Stomach (tissue), 19 donors: ENCODE measurements at regions of chr1 and their contacts with region 1.

Region 1: DNA sequence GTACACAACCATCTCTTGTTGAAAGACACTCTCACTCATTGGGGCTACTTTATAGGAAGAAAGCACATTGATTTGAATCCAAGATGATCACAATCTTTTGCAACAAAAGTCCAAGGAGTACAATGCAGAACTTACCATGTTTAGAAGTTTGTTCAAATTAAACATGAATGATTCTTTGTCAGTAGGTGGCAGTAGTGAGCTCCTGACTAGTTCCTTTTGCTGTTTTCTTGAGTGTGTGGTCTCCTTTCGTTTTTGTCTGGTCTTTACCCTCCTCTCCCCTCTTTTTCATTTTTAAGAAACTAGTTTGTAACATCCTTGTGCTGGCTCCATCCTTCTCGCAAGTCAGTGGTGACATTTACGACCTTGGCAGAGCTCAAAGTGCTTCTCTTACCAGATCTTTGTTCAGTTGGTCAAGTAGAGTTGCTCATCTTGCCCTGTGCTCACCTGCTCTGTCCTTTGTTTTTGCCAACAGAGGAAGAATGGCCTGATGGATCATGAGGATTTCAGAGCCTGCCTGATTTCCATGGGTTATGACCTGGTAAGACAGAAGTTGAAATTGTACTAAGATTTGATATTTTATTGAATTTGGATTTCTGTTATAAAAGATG is 35.7 kb upstream of the MTR start:
- DNase-seq: peak in 1 of 2 donors; percentile 65
- H3K4me3 ChIP-seq: no peak overlapping the region
- H3K27ac ChIP-seq: no peak overlapping the region
- H3K4me1 ChIP-seq: peaks cover 0 to under 1% (median 0%) of the 10 kb centered on the region in 4 donors
- H3K27me3 ChIP-seq: no peaks in the 10 kb centered on the region
- CTCF ChIP-seq: peak in 4 of 7 experiments; percentile 39 to 62 (median 49)
- EP300 ChIP-seq: no peak
- POLR2A ChIP-seq: no peak

Region 2: DNA sequence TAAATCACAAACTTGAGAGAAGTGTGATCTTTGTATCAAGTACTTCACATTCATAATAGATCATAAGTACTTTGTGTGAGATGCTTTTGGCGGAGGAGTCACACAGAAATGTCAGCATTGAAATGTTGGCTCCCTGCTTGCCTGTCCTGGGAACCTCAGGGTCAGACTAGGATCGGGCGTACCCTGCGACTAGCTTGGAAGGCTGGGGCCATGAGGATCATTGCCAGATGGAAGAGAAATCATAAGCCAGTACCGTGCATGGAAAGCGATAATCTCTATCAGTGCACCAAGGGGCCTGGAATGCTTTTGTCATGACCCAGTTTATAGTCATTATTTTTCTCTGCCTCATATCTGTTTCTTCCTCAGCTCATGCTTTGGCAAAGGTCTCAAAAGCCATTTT is 71.2 kb after region 1 on chr1:
- intact Hi-C with region 1: no loop called
- DNase-seq: peak in 1 of 2 donors; percentile 16
- H3K4me3 ChIP-seq: no peak overlapping the region
- H3K27ac ChIP-seq: no peak overlapping the region
- H3K4me1 ChIP-seq: peaks cover 0 to 3% (median 0%) of the 10 kb centered on the region in 4 donors
- H3K27me3 ChIP-seq: no peaks in the 10 kb centered on the region
- CTCF ChIP-seq: no peak
- EP300 ChIP-seq: no peak
- POLR2A ChIP-seq: no peak

Region 3: GRCh38 chr1:237562242-237562823 is 803.0 kb after region 1 on chr1:
- intact Hi-C with region 1: loop called (anchors 10 kb)
- DNase-seq: peak in 1 of 2 donors; percentile 82
- H3K4me3 ChIP-seq: no peak overlapping the region
- H3K27ac ChIP-seq: no peak overlapping the region
- H3K4me1 ChIP-seq: no peaks in the 10 kb centered on the region
- H3K27me3 ChIP-seq: no peaks in the 10 kb centered on the region
- CTCF ChIP-seq: peak in 4 of 7 experiments; percentile 18 to 67 (median 40)
- EP300 ChIP-seq: no peak
- POLR2A ChIP-seq: no peak